ENCODE measurements at regions of chr6 and their contacts with region 1.

Region 1: DNA sequence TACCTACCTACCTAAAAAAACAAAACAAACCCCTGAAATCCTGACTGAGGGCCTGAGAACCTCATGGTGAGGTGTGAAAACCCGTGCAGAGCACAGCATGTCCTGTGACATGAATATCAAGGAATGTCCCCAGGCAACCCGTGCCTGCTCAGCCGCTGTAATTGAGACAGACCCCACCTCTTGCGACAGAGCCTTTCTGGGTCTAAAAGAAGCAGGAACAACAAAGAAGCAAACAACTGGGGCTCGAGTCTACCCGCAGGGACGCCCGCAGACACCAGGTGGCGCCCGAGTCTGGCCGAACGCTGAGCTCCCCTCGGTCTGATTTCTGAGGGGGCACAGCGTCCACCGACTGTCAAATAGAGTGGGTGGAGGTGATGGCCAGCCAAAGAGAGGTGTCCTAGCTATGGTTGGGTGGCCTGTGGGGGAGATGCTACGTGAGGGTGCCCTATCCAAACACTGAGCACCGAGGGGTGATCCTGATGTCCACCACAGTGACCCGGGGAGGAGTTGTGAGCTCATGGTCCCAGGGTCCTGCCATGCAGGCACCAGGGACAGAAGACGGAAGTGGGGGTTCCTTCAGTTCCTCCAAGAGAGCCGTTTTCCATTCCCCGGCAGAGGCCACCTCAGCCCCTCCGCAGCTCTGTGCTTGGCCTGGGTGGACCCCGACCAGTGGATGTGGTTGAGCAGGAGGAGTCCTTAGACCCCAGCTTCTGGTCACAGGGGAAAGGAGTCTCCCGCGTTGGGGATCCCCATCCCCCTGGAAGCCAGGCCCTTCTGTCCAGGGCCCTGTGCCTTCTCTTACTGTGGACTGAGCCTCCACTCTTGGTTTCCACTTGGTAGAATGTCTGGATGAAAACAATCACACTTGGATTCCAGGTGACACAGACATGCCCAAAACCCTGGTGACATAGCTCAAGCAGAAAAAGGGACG is 268.2 kb downstream of the CDC5L start:
- DNase-seq: no peak
- ATAC-seq: peak; percentile 90
- H3K4me3 ChIP-seq: no peak overlapping the region
- H3K27ac ChIP-seq: no peak overlapping the region
- H3K4me1 ChIP-seq: no peaks in the 10 kb centered on the region; the same call in 1 of the 2 replicates
- H3K27me3 ChIP-seq: peaks cover 0 to 2% of the 10 kb centered on the region in 2 experiments; a peak in 1 of 4 replicates
- CTCF ChIP-seq: peak; percentile 90 to 92 (median 90)
- EP300 ChIP-seq: no peak
- POLR2A ChIP-seq: no peak
- RAD21 ChIP-seq: peak; percentile 92

Region 2: DNA sequence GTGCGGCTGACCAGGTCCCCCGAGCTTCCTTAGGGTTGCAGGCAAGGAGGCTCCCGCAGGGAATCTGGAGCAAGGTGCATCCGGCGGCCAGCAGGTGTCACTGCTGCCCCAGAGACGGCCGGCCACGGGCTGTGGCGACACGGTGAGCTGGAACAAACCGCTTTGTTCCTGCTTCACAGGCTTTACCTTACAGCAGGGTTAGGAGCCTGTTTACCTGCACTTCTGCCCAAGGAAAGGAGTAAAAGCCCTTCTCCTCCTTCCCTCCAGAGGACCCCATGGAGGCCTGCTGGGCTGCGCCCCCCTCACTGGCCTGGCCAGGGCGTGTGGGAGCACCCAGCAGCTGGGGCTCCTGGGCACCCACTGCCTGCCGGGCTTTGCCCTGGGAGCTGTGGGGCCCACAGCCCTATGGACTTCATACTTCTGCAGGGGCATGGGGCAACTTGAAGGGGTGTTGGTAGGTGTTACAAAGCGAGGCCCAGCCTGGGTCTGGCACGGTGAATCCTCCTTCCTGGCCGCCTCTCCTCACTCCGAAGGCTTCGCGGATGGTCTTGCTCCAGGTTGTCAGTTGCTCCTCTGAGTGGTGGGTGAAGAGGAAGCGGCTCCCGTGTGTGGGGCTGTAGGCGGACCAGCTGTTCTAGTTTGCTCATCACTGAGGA is 179.8 kb before region 1 on chr6:
- CTCF ChIA-PET with region 1: interaction called, 3 read pairs
- POLR2A ChIA-PET with region 1: no interaction called
- RAD21 ChIA-PET with region 1: interaction called, 11 read pairs
- SMC1A ChIA-PET with region 1: interaction called, 4 read pairs
- in situ Hi-C with region 1: no loop called
- intact Hi-C with region 1: loop called (anchors 5 kb)
- DNase-seq: no peak
- ATAC-seq: peak; percentile 97
- H3K4me3 ChIP-seq: no peak overlapping the region
- H3K27ac ChIP-seq: no peak overlapping the region
- H3K4me1 ChIP-seq: no peaks in the 10 kb centered on the region
- H3K27me3 ChIP-seq: no peaks in the 10 kb centered on the region; a peak in 3 of 4 replicates
- CTCF ChIP-seq: peak; percentile 84 to 95 (median 92)
- EP300 ChIP-seq: no peak
- POLR2A ChIP-seq: no peak
- RAD21 ChIP-seq: peak; percentile 81

Region 3: GRCh38 chr6:44606504-44606903 is 49.2 kb before region 1 on chr6:
- CTCF ChIA-PET with region 1: no interaction called
- POLR2A ChIA-PET with region 1: no interaction called
- RAD21 ChIA-PET with region 1: no interaction called
- SMC1A ChIA-PET with region 1: no interaction called
- in situ Hi-C with region 1: no loop called
- intact Hi-C with region 1: no loop called
- DNase-seq: no peak
- ATAC-seq: no peak
- H3K4me3 ChIP-seq: no peak overlapping the region
- H3K27ac ChIP-seq: no peak overlapping the region
- H3K4me1 ChIP-seq: no peaks in the 10 kb centered on the region
- H3K27me3 ChIP-seq: no peaks in the 10 kb centered on the region; a peak in 1 of 4 replicates
- CTCF ChIP-seq: no peak
- EP300 ChIP-seq: no peak
- POLR2A ChIP-seq: no peak
- RAD21 ChIP-seq: no peak

Region 4: GRCh38 chr6:44618371-44618770 is 37.3 kb before region 1 on chr6:
- CTCF ChIA-PET with region 1: no interaction called
- POLR2A ChIA-PET with region 1: no interaction called
- RAD21 ChIA-PET with region 1: no interaction called
- SMC1A ChIA-PET with region 1: no interaction called
- in situ Hi-C with region 1: no loop called
- intact Hi-C with region 1: no loop called
- DNase-seq: no peak
- ATAC-seq: no peak
- H3K4me3 ChIP-seq: no peak overlapping the region
- H3K27ac ChIP-seq: no peak overlapping the region
- H3K4me1 ChIP-seq: no peaks in the 10 kb centered on the region
- H3K27me3 ChIP-seq: no peaks in the 10 kb centered on the region; a peak in 1 of 4 replicates
- CTCF ChIP-seq: no peak
- EP300 ChIP-seq: no peak
- POLR2A ChIP-seq: no peak
- RAD21 ChIP-seq: no peak

Region 5: GRCh38 chr6:44667668-44668390 is 12.2 kb after region 1 on chr6:
- CTCF ChIA-PET with region 1: interaction called, 22 read pairs
- POLR2A ChIA-PET with region 1: no interaction called
- RAD21 ChIA-PET with region 1: interaction called, 4 read pairs
- SMC1A ChIA-PET with region 1: interaction called, 9 read pairs
- in situ Hi-C with region 1: no loop called
- intact Hi-C with region 1: no loop called
- DNase-seq: no peak
- ATAC-seq: peak; percentile 89
- H3K4me3 ChIP-seq: no peak overlapping the region
- H3K27ac ChIP-seq: no peak overlapping the region
- H3K4me1 ChIP-seq: no peaks in the 10 kb centered on the region
- H3K27me3 ChIP-seq: no peaks in the 10 kb centered on the region; a peak in 1 of 4 replicates
- CTCF ChIP-seq: peak; percentile 67 to 89 (median 83)
- EP300 ChIP-seq: no peak
- POLR2A ChIP-seq: no peak
- RAD21 ChIP-seq: peak; percentile 65

Region 6: DNA sequence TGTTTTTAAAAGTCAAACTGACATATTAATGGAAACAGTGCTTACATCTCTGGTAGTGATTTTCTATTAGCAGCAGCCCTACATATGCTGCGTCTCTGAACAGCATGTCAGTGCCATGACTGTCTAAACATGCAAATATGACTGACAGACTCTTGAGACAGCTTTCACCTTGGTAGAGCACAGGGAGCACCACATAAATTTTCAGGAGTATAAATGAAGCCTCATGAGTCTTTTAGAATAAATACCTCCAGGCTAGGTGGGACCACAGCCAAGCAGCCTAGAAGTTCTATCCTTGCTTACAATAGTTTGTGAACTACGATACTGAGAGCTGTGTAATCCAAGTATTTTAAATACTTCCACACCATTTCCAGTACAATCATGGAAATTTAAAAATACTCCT is 261.8 kb after region 1 on chr6:
- CTCF ChIA-PET with region 1: no interaction called
- POLR2A ChIA-PET with region 1: no interaction called
- RAD21 ChIA-PET with region 1: no interaction called
- SMC1A ChIA-PET with region 1: no interaction called
- in situ Hi-C with region 1: no loop called
- intact Hi-C with region 1: no loop called
- DNase-seq: no peak
- ATAC-seq: no peak
- H3K4me3 ChIP-seq: no peak overlapping the region
- H3K27ac ChIP-seq: no peak overlapping the region
- H3K4me1 ChIP-seq: no peaks in the 10 kb centered on the region
- H3K27me3 ChIP-seq: no peaks in the 10 kb centered on the region
- CTCF ChIP-seq: no peak
- EP300 ChIP-seq: no peak
- POLR2A ChIP-seq: no peak
- RAD21 ChIP-seq: no peak

Region 7: GRCh38 chr6:45226081-45226480 is 570.4 kb after region 1 on chr6:
- CTCF ChIA-PET with region 1: no interaction called
- POLR2A ChIA-PET with region 1: no interaction called
- RAD21 ChIA-PET with region 1: no interaction called
- SMC1A ChIA-PET with region 1: no interaction called
- in situ Hi-C with region 1: no loop called
- intact Hi-C with region 1: loop called (anchors 10 kb)
- DNase-seq: no peak
- ATAC-seq: no peak
- H3K4me3 ChIP-seq: no peak overlapping the region
- H3K27ac ChIP-seq: no peak overlapping the region
- H3K4me1 ChIP-seq: no peaks in the 10 kb centered on the region
- H3K27me3 ChIP-seq: no peaks in the 10 kb centered on the region
- CTCF ChIP-seq: no peak; a peak in 1 of 6 replicates
- EP300 ChIP-seq: no peak
- POLR2A ChIP-seq: no peak
- RAD21 ChIP-seq: no peak

Region 8: GRCh38 chr6:45421709-45422502 is 766.2 kb after region 1 on chr6:
- CTCF ChIA-PET with region 1: interaction called, 16 read pairs
- POLR2A ChIA-PET with region 1: no interaction called
- RAD21 ChIA-PET with region 1: interaction called, 9 read pairs
- SMC1A ChIA-PET with region 1: interaction called, 4 read pairs
- in situ Hi-C with region 1: no loop called
- intact Hi-C with region 1: loop called (anchors 10 kb)
- DNase-seq: no peak
- ATAC-seq: peak; percentile 49
- H3K4me3 ChIP-seq: peak overlapping the region; percentile 48; the same call in 1 of the 2 replicates
- H3K27ac ChIP-seq: no peak overlapping the region
- H3K4me1 ChIP-seq: no peaks in the 10 kb centered on the region; the same call in 1 of the 2 replicates
- H3K27me3 ChIP-seq: peaks cover 20 to 38% of the 10 kb centered on the region in 2 experiments
- CTCF ChIP-seq: peak in 2 of 3 experiments; percentile 10 to 15; a peak in 1 of 6 replicates
- EP300 ChIP-seq: no peak
- POLR2A ChIP-seq: no peak
- RAD21 ChIP-seq: no peak